Activated B cell treated with CpG ODN at 0.5 μM for 24 hours (primary cell): ENCODE measurements at regions of chr6 and their contacts with region 1.

Region 1: GRCh38 chr6:26537846-26538571 is at the start of gene HMGN4:
- DNase-seq: peak; percentile 73
- ATAC-seq: peak; percentile 67
- H3K4me3 Mint-ChIP-seq: peak within 1 kb of the TSS; percentile 98
- H3K27ac Mint-ChIP-seq: peak within 1 kb of the TSS; percentile 97
- H3K4me1 Mint-ChIP-seq: peaks cover 65% of the 10 kb centered on the region
- H3K27me3 Mint-ChIP-seq: peaks cover 7% of the 10 kb centered on the region
- CTCF ChIP-seq: no peak
- total RNA-seq, gene HMGN4: 74.5 and 82.2 TPM in 2 replicates

Region 2: GRCh38 chr6:26312501-26313390 is 225.3 kb before region 1 on chr6:
- CTCF ChIA-PET with region 1: no interaction called
- POLR2A ChIA-PET with region 1: interaction called, 5 read pairs
- intact Hi-C with region 1: loop called (anchors 2 kb)
- DNase-seq: peak; percentile 63
- ATAC-seq: peak; percentile 79
- H3K4me3 Mint-ChIP-seq: peak overlapping the region; percentile 90
- H3K27ac Mint-ChIP-seq: peak overlapping the region; percentile 95
- H3K4me1 Mint-ChIP-seq: peaks cover 28% of the 10 kb centered on the region
- H3K27me3 Mint-ChIP-seq: peaks cover 5% of the 10 kb centered on the region
- CTCF ChIP-seq: no peak

Region 3: GRCh38 chr6:26322645-26323482 is 215.1 kb before region 1 on chr6:
- CTCF ChIA-PET with region 1: no interaction called
- POLR2A ChIA-PET with region 1: interaction called, 14 read pairs
- intact Hi-C with region 1: loop called (anchors 1 kb)
- DNase-seq: no peak
- ATAC-seq: peak; percentile 56
- H3K4me3 Mint-ChIP-seq: peak overlapping the region; percentile 89
- H3K27ac Mint-ChIP-seq: peak overlapping the region; percentile 85
- H3K4me1 Mint-ChIP-seq: peaks cover 25% of the 10 kb centered on the region
- H3K27me3 Mint-ChIP-seq: peaks cover 14% of the 10 kb centered on the region
- CTCF ChIP-seq: no peak

Region 4: DNA sequence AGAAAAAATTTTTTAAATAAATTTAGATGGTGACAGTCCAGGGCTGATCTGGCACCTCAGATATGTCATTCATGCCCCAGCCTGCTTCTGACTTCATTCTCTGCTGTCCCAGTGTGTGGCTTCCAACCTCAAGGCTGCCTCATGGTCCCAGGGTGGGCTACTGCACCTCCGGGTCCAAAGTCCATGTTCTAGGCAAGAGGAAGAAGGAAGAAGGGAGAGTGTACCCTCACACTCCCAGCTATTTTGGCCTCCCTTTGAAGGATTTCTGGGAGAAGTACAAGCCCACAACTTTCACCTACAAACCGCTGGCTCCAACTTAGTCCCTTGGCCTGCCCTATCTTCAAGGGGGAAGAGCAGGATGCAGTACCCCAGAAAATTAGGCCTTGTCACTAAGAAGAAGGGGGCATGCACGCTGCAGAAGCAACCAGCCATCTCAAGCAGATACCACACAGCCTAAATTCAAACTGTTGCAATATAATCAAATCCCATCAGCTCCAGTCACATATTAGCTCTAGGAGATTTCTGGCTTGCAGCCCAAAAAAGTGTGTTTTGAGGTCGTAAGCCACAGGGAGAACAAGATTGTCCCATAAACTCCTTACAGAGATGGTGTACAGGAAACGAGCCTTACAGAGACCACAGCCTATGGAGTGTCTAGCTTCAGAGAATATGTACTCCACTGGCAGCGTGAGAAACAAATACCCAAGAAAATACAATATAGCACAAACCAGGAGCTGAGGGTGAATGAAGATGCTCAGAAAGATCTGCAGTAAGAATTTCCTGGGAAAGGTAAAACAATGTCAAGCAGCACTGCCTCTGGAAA is 173.9 kb before region 1 on chr6:
- CTCF ChIA-PET with region 1: no interaction called
- POLR2A ChIA-PET with region 1: interaction called, 9 read pairs
- intact Hi-C with region 1: loop called (anchors 1 kb)
- DNase-seq: no peak
- ATAC-seq: no peak
- H3K4me3 Mint-ChIP-seq: no peak overlapping the region
- H3K27ac Mint-ChIP-seq: no peak overlapping the region
- H3K4me1 Mint-ChIP-seq: peaks cover 39% of the 10 kb centered on the region
- H3K27me3 Mint-ChIP-seq: peaks cover 7% of the 10 kb centered on the region
- CTCF ChIP-seq: no peak

Region 5: GRCh38 chr6:26383624-26384417 is 154.2 kb before region 1 on chr6:
- CTCF ChIA-PET with region 1: no interaction called
- POLR2A ChIA-PET with region 1: interaction called, 4 read pairs
- intact Hi-C with region 1: loop called (anchors 1 kb)
- DNase-seq: no peak
- ATAC-seq: peak; percentile 16
- H3K4me3 Mint-ChIP-seq: peak overlapping the region; percentile 97
- H3K27ac Mint-ChIP-seq: peak overlapping the region; percentile 94
- H3K4me1 Mint-ChIP-seq: peaks cover 66% of the 10 kb centered on the region
- H3K27me3 Mint-ChIP-seq: no peaks in the 10 kb centered on the region
- CTCF ChIP-seq: no peak

Region 6: GRCh38 chr6:26568601-26569432 is 30.8 kb after region 1 on chr6:
- CTCF ChIA-PET with region 1: interaction called, 4 read pairs
- POLR2A ChIA-PET with region 1: interaction called, 26 read pairs
- intact Hi-C with region 1: loop called (anchors 1 kb)
- DNase-seq: peak; percentile 98
- ATAC-seq: peak; percentile 80
- H3K4me3 Mint-ChIP-seq: peak overlapping the region; percentile 96
- H3K27ac Mint-ChIP-seq: peak overlapping the region; percentile 98
- H3K4me1 Mint-ChIP-seq: peaks cover 26% of the 10 kb centered on the region
- H3K27me3 Mint-ChIP-seq: peaks cover 3% of the 10 kb centered on the region
- CTCF ChIP-seq: no peak

Region 7: DNA sequence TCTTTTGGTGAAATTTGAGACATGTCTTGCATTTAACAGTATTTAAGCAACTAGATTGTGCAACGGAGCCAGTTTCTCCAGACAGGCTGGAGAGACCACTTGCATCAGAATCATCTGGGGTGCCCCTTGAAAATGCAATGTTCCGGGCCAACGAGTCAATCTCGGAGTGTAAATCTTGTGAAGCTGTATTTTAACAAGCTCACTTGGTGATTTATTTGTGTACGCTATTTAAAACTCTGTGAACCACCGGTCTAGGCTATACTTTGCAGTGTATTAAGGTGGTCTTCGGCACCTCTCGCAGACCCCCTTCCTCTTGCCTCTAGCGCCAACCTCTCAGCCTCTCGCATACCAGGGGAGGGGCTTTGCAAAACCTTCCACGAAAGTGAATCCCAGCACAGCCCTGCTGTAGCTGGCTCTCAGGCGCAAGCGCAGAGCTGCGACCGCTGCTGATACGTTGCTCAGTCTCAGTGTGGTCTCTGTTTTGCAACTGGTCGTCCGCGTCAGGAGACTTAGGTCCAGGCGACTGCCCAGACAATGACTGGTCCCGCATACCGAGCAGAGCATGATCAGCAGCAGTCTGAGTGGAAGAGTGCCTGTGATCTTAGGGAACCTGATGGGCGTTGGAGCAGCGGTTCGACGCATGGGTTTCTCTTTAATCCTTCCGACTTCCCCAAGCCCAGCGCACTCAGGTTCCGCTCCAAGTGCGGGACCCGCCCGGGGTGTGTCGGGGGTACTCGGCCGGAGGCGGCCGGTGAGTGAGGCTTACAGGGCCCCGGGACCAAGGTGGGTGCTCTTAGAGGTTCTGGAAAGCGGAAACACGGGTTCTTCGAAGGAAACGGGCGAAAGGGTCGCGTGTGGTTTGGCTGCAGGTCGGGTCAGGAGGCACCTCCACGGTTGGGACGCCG is 850.5 kb after region 1 on chr6 and contains the start of gene ZNF391:
- CTCF ChIA-PET with region 1: no interaction called
- POLR2A ChIA-PET with region 1: interaction called, 4 read pairs
- intact Hi-C with region 1: loop called (anchors 5 kb)
- DNase-seq: peak; percentile 73
- ATAC-seq: peak; percentile 88
- H3K4me3 Mint-ChIP-seq: peak within 1 kb of the TSS; percentile 97
- H3K27ac Mint-ChIP-seq: peak within 1 kb of the TSS; percentile 95
- H3K4me1 Mint-ChIP-seq: peaks cover 13% of the 10 kb centered on the region
- H3K27me3 Mint-ChIP-seq: no peaks in the 10 kb centered on the region
- CTCF ChIP-seq: no peak
- total RNA-seq, gene ZNF391: 4.8 and 5.9 TPM in 2 replicates